Pancreas (tissue), 10 donors: ENCODE measurements at regions of chr4 and their contacts with region 1.

Region 1: DNA sequence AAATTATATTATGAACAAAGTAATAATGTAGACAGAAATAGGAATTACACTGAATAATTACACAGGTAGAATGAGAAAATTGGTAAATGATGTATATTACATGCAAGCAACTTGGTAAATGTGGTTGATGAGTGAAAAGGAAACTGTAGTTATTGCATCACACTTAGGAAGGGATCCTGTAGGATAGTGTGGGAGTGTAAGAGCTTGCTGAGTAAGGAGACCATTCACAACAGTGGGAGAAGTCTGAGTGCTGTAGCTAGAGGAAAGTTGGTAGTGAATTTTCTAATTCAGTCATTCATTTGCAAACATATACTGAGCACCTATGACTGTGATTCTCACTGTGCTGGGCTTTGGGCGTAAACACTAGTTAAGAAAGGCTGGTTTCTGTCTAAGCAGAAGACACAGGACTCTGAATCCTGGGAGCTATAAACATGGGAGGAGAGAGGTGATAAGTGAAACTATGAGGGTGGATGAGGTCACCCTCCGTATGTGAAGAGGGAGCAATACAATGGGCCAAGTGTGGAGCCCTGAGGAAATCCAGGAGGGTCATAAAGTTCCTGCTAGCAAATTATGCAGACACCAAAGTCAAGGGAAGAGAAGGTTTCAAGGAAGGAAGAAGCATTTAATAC is 14.2 kb upstream of the CPE start:
- DNase-seq: no peak
- ATAC-seq: peak in 1 of 4 donors; percentile 32
- H3K4me3 ChIP-seq: no peak overlapping the region
- H3K27ac ChIP-seq: no peak overlapping the region
- H3K4me1 ChIP-seq: no peaks in the 10 kb centered on the region
- H3K27me3 ChIP-seq: no peaks in the 10 kb centered on the region
- CTCF ChIP-seq: no peak

Region 2: DNA sequence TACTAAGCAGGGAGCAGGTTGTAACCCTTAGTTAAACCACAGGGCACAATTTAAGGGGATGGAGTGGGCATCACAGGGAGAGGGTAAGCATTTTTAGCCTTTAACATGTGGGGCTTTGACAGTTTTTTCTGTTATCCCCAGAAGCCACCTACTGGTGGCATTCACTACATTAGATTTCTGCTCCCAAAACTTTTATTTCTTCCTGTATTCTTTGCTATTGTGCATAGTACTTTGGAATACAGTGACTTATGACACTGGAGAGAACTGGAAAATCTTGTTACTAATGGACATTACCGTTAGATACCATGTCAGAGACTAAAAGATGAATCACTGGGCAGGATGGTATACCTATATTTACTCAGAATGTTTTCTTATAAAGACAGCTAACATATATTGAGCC is 303.6 kb before region 1 on chr4:
- intact Hi-C with region 1: no loop called
- DNase-seq: no peak
- ATAC-seq: no peak
- H3K4me3 ChIP-seq: no peak overlapping the region
- H3K27ac ChIP-seq: no peak overlapping the region
- H3K4me1 ChIP-seq: no peaks in the 10 kb centered on the region
- H3K27me3 ChIP-seq: no peaks in the 10 kb centered on the region
- CTCF ChIP-seq: no peak

Region 3: GRCh38 chr4:165294907-165295306 is 69.7 kb before region 1 on chr4:
- intact Hi-C with region 1: no loop called
- DNase-seq: no peak
- ATAC-seq: peak in 1 of 4 donors; percentile 39
- H3K4me3 ChIP-seq: no peak overlapping the region
- H3K27ac ChIP-seq: no peak overlapping the region
- H3K4me1 ChIP-seq: peaks cover 0 to 7% (median 0%) of the 10 kb centered on the region in 3 donors
- H3K27me3 ChIP-seq: no peaks in the 10 kb centered on the region
- CTCF ChIP-seq: no peak

Region 4: GRCh38 chr4:165476214-165477098 is 111.9 kb after region 1 on chr4:
- intact Hi-C with region 1: loop called in 1 of 3 experiments (anchors 10 kb)
- DNase-seq: no peak
- ATAC-seq: peak in 3 of 4 donors; percentile 15 to 58 (median 35)
- H3K4me3 ChIP-seq: no peak overlapping the region
- H3K27ac ChIP-seq: no peak overlapping the region
- H3K4me1 ChIP-seq: no peaks in the 10 kb centered on the region
- H3K27me3 ChIP-seq: no peaks in the 10 kb centered on the region
- CTCF ChIP-seq: no peak